PC-9 (cell line): ENCODE measurements at regions of chr5 and their contacts with region 1.

Region 1: DNA sequence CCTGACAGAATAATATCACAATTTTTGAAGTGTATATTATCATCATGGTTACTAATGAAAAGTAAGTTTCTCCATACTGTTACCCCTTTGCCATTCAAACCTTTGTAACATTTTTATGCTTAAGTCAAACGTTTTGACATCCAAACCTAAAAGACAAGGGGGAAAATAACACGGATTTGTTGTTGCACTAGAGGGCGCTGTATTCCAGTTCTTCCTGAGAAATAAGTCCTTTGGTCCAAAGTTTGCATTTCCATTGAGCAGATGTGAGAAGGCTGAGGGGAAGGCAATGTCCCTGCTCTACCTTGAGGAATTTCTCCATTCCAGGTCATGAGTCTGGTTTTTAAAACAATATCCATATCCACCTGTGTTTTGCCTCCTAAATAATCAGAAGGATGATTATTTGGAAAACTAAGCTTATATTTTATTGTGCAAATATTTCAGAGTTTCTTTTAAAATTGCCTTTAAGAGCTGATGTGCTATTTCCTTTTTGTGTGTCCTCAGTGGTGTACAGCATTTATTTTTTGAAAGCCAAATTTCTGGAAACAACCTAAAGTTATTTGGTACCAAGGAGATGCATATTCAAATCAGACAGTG is 9.7 kb downstream of the LECT2 start:
- DNase-seq: peak; percentile 31 to 62
- H3K4me3 ChIP-seq: no peak overlapping the region
- H3K27ac ChIP-seq: no peak overlapping the region
- H3K4me1 ChIP-seq: no peaks in the 10 kb centered on the region
- H3K27me3 ChIP-seq: no peaks in the 10 kb centered on the region
- CTCF ChIP-seq: peak; percentile 91

Region 2: DNA sequence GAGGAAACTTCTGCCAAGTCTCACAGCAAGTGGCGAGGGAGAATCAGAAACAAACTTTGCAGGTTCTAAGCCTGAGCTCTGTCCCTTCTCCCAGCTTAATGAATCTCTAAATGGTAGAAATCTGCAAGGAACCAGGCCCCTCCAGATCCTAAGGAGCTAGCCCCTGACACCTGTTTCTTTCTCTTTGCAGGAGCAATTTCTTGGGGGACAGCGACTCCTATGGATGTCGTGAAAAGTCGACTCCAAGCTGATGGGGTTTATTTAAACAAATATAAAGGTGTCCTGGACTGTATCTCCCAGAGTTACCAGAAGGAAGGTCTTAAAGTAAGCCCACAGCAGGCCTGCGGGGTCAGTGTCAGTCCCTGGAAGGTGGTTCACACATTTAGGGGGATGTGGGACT is 71.2 kb before region 1 on chr5:
- CTCF ChIA-PET with region 1: no interaction called
- POLR2A ChIA-PET with region 1: no interaction called
- intact Hi-C with region 1: no loop called
- DNase-seq: no peak
- H3K4me3 ChIP-seq: no peak overlapping the region
- H3K27ac ChIP-seq: no peak overlapping the region
- H3K4me1 ChIP-seq: no peaks in the 10 kb centered on the region
- H3K27me3 ChIP-seq: peaks cover 54% of the 10 kb centered on the region
- CTCF ChIP-seq: peak; percentile 25; the same call in 1 of the 2 replicates

Region 3: DNA sequence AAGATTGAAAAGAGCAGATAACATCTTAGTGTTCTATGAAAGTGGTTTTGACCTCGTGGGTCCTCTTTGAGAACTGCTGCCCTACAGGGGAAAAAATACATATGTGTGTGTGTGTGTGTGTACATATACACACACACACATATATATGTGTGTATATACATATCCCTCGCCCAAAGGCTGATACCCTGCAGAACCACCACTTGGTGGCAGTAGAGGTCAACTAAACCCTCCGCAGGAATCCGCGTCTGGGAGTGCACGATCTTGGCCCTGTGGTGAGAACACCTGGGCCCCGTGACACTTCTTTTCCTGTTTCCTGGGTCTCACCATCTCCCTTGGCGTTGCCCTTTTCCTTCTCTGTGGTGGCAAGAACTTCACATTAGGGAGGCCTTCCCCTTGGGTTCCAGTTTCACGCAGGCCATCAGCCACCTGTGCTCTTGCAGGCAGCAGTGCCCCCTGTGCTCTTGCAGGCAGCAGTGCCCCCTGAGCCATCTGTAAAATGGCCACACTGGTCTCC is 57.7 kb before region 1 on chr5:
- CTCF ChIA-PET with region 1: no interaction called
- POLR2A ChIA-PET with region 1: no interaction called
- intact Hi-C with region 1: loop called (anchors 1 kb)
- DNase-seq: peak; percentile 56 to 65
- H3K4me3 ChIP-seq: no peak overlapping the region
- H3K27ac ChIP-seq: no peak overlapping the region
- H3K4me1 ChIP-seq: peaks cover 15% of the 10 kb centered on the region
- H3K27me3 ChIP-seq: peaks cover 20% of the 10 kb centered on the region
- CTCF ChIP-seq: peak; percentile 90

Region 4: GRCh38 chr5:136062366-136063274 is 117.6 kb after region 1 on chr5:
- CTCF ChIA-PET with region 1: interaction called, 4 read pairs
- POLR2A ChIA-PET with region 1: no interaction called
- intact Hi-C with region 1: loop called (anchors 1 kb)
- DNase-seq: peak; percentile 26 to 51
- H3K4me3 ChIP-seq: no peak overlapping the region
- H3K27ac ChIP-seq: no peak overlapping the region
- H3K4me1 ChIP-seq: peaks cover 13% of the 10 kb centered on the region
- H3K27me3 ChIP-seq: no peaks in the 10 kb centered on the region
- CTCF ChIP-seq: peak; percentile 74

Region 5: GRCh38 chr5:136174021-136174659 is 229.1 kb after region 1 on chr5:
- CTCF ChIA-PET with region 1: no interaction called
- POLR2A ChIA-PET with region 1: no interaction called
- intact Hi-C with region 1: loop called (anchors 5 kb)
- DNase-seq: no peak
- H3K4me3 ChIP-seq: no peak overlapping the region
- H3K27ac ChIP-seq: no peak overlapping the region
- H3K4me1 ChIP-seq: no peaks in the 10 kb centered on the region
- H3K27me3 ChIP-seq: no peaks in the 10 kb centered on the region
- CTCF ChIP-seq: peak; percentile 77

Region 6: GRCh38 chr5:136212252-136212721 is 267.2 kb after region 1 on chr5:
- CTCF ChIA-PET with region 1: no interaction called
- POLR2A ChIA-PET with region 1: no interaction called
- intact Hi-C with region 1: loop called (anchors 2 kb)
- DNase-seq: peak in 1 of 2 experiments; percentile 29
- H3K4me3 ChIP-seq: no peak overlapping the region
- H3K27ac ChIP-seq: no peak overlapping the region
- H3K4me1 ChIP-seq: no peaks in the 10 kb centered on the region
- H3K27me3 ChIP-seq: no peaks in the 10 kb centered on the region
- CTCF ChIP-seq: peak; percentile 91

Region 7: GRCh38 chr5:137032929-137033328 is 1087.9 kb after region 1 on chr5:
- CTCF ChIA-PET with region 1: no interaction called
- POLR2A ChIA-PET with region 1: no interaction called
- intact Hi-C with region 1: no loop called
- DNase-seq: no peak
- H3K4me3 ChIP-seq: no peak overlapping the region
- H3K27ac ChIP-seq: no peak overlapping the region
- H3K4me1 ChIP-seq: no peaks in the 10 kb centered on the region; the same call in 1 of the 2 replicates
- H3K27me3 ChIP-seq: no peaks in the 10 kb centered on the region
- CTCF ChIP-seq: no peak